Cardiac septum (tissue), 1 donor: ENCODE measurements at regions of chr9 and their contacts with region 1.

Region 1: DNA sequence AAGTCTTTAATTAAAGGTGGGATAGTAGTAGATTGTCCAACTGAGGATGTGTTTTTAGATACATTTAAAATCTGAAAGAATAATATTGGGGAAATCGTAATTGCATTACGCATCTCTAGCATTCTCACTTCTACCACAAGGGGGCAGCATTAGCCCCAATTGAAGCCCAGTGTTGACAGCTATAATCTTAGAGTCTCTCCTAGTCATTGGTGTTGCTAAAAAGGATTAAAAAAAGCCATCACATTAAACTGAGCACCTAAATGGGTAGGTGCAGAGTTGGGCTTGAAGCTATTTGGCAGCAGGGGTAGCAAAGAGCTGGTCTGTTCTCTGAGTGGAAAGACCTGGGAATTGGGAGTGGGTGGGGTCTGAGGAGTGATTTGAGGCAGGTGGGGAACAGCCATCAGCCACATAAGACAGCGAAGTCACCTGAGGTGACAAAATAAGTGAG is 177.2 kb downstream of the OSTF1 start:
- DNase-seq: no peak

Region 2: DNA sequence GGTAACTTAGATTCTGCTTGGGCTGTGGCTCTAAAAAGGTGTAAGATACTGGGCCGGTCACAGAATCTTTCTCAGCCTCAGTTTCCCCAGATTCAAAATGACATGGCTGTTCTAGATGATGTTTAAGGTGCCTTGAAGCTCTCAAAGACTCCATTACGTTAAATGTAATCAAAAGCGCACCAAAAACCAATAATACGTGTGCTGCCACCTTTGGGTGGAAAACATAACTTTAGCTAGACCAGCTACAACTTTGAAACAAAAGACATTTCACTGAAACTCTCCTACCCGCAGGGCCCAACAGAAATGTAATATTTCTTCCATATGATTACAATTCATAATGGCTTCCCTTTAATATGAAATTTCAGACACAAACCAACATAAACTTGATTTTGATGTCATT is 590.0 kb after region 1 on chr9:
- intact Hi-C with region 1: loop called (anchors 5 kb)
- DNase-seq: no peak